CD4-positive, alpha-beta memory T cell (primary cell): ENCODE measurements at regions of chr3 and their contacts with region 1.

Region 1: GRCh38 chr3:50350527-50351322 is at the starts of genes CYB561D2 and NPRL2:
- DNase-seq: peak; percentile 99 to 100 (median 99)
- H3K4me3 ChIP-seq: peak within 1 kb of the TSS; percentile 66 to 98
- H3K4me3 Mint-ChIP-seq: peak within 1 kb of the TSS; percentile 91 to 99 (median 96)
- H3K27ac ChIP-seq: peak within 1 kb of the TSS; percentile 94
- H3K27ac Mint-ChIP-seq: peak within 1 kb of the TSS; percentile 96 to 99 (median 99)
- H3K4me1 ChIP-seq: peaks cover 58% of the 10 kb centered on the region
- H3K4me1 Mint-ChIP-seq: peaks cover 28 to 78% (median 53%) of the 10 kb centered on the region in 4 donors
- H3K27me3 ChIP-seq: no peaks in the 10 kb centered on the region
- H3K27me3 Mint-ChIP-seq: no peaks in the 10 kb centered on the region
- total RNA-seq, gene CYB561D2: 39.6 to 40.0 TPM
- total RNA-seq, gene NPRL2: 50.0 to 53.0 TPM

Region 2: GRCh38 chr3:50227390-50228183 is 123.1 kb before region 1 on chr3:
- CTCF ChIA-PET with region 1: no interaction called
- POLR2A ChIA-PET with region 1: no interaction called
- intact Hi-C with region 1: no loop called
- DNase-seq: peak; percentile 90 to 92 (median 91)
- H3K4me3 ChIP-seq: peak overlapping the region; percentile 79 to 87
- H3K4me3 Mint-ChIP-seq: peak overlapping the region; percentile 89 to 99 (median 94)
- H3K27ac ChIP-seq: peak overlapping the region; percentile 59
- H3K27ac Mint-ChIP-seq: peak overlapping the region; percentile 92 to 96 (median 95)
- H3K4me1 ChIP-seq: peaks cover 18% of the 10 kb centered on the region
- H3K4me1 Mint-ChIP-seq: peaks cover 15 to 39% (median 30%) of the 10 kb centered on the region in 4 donors
- H3K27me3 ChIP-seq: no peaks in the 10 kb centered on the region
- H3K27me3 Mint-ChIP-seq: peaks cover 0 to 2% of the 10 kb centered on the region in 2 donors

Region 3: DNA sequence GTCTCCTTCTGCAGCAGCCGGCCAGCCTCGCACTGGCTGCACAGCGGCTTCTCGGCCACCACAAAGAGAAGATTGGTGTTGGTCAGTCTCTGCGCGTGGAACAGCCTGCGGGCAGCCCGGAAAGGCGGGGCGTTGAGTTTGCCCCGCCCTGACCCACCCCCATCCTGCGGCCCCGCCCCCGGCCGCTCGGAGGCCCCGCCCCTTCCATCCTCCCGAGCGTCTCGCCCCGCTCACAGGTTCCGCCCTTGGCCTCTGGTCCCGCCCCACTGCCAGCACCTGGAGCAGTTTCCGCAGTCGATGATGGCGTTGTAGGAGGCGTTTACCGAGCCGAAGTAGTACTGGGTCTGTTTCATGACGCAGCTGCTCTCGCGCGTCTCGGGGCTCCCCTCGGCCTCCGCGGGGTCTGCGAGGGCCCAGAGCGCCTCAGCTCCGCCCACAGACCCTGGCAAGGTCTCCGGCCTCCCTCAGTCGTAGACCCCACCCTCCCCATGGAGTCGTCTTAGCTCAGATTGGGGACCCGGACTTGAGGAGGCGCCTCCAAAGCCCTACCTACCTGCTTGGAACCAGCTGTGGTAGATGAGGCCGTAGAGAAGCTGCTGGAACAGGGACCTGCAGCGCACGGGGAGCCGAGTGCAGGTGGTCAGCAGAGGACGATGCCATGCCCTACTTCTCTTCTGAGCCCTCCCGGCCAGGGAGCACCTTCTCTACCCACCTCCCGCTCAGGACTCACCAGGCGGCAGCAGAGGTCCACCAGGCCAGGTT is 14.5 kb after region 1 on chr3:
- CTCF ChIA-PET with region 1: interaction called, 13 read pairs
- POLR2A ChIA-PET with region 1: interaction called, 595 read pairs
- intact Hi-C with region 1: loop called (anchors 2 kb)
- DNase-seq: peak; percentile 92 to 97 (median 95)
- H3K4me3 ChIP-seq: peak overlapping the region; percentile 73 to 100
- H3K4me3 Mint-ChIP-seq: peak overlapping the region; percentile 86 to 94 (median 90)
- H3K27ac ChIP-seq: peak overlapping the region; percentile 87
- H3K27ac Mint-ChIP-seq: peak overlapping the region; percentile 91 to 97 (median 95)
- H3K4me1 ChIP-seq: peaks cover 30% of the 10 kb centered on the region
- H3K4me1 Mint-ChIP-seq: peaks cover 4 to 35% (median 18%) of the 10 kb centered on the region in 4 donors
- H3K27me3 ChIP-seq: no peaks in the 10 kb centered on the region
- H3K27me3 Mint-ChIP-seq: peaks cover 0 to 1% of the 10 kb centered on the region in 2 donors

Region 4: DNA sequence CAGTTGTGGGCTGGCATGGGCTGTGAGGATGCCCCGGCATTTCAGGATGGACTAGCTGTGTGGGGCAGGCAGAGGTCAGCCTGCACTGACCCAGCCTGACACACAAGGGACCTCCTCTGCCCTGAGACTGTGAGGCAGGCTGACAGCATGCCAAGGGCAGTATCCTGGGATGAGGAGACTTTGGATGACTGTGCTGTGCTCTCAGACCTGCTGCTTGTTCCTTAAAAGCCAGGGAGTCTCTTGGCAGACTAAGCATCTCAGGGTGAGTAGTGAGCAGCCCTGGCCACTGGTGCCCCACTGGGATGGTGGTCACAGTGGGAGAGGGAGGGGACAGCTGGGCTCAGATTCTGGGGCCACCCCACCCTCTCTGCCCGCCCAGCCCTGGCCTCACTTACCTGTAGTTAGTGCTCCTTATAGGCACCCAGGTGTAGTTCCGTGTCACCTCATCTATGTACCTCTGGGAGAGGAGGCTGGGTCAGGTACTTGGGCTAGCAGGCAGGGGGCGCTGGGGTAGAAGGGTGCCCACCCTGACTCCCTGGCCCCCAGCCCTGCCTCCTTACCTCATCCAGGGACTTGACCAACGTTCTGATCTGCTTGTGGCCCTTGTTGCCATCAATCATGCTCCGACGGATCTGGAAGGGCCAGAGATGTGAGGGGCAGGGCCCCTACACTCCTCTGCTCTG is 24.7 kb after region 1 on chr3:
- CTCF ChIA-PET with region 1: no interaction called
- POLR2A ChIA-PET with region 1: no interaction called
- intact Hi-C with region 1: no loop called
- DNase-seq: no peak
- H3K4me3 ChIP-seq: no peak overlapping the region
- H3K4me3 Mint-ChIP-seq: no peak overlapping the region
- H3K27ac ChIP-seq: no peak overlapping the region
- H3K27ac Mint-ChIP-seq: no peak overlapping the region
- H3K4me1 ChIP-seq: no peaks in the 10 kb centered on the region
- H3K4me1 Mint-ChIP-seq: peaks cover 0 to 2% (median under 1%) of the 10 kb centered on the region in 4 donors
- H3K27me3 ChIP-seq: no peaks in the 10 kb centered on the region
- H3K27me3 Mint-ChIP-seq: no peaks in the 10 kb centered on the region

Region 5: DNA sequence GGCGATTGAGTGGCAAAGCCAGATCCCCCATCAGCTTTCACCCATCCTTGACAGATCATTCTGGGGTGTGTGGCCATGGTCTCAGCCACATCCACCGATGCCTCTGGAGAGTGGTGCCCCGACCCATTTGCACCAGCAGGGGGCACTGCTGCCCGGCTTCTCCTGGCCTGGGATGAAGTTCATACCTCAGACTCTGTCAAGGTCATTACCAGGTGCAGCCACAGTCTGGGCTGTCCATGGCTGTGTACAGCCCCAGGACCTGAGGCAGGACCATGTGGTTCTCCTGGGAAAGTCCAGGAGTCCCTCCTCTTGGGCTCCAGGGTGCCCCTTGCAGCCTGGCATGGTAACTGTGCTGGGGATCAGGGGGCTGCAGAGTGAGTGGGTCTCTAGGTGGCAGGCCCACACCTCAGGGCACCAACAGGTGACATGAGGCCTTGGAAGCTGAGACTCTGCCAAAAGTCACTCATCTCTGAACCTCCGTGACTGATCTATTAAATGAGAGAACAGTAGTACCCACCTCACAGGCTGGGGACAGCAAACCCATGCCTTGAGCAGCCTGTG is 85.5 kb after region 1 on chr3:
- CTCF ChIA-PET with region 1: no interaction called
- POLR2A ChIA-PET with region 1: no interaction called
- intact Hi-C with region 1: loop called (anchors 1 kb)
- DNase-seq: peak; percentile 63 to 74 (median 66)
- H3K4me3 ChIP-seq: no peak overlapping the region
- H3K4me3 Mint-ChIP-seq: no peak overlapping the region
- H3K27ac ChIP-seq: no peak overlapping the region
- H3K27ac Mint-ChIP-seq: peak overlapping the region in 1 of 7 donors; percentile 14
- H3K4me1 ChIP-seq: no peaks in the 10 kb centered on the region
- H3K4me1 Mint-ChIP-seq: peaks cover 0 to 6% (median 2%) of the 10 kb centered on the region in 4 donors
- H3K27me3 ChIP-seq: no peaks in the 10 kb centered on the region
- H3K27me3 Mint-ChIP-seq: peaks cover 0 to 3% of the 10 kb centered on the region in 2 donors

Region 6: GRCh38 chr3:50550079-50550741 is 199.5 kb after region 1 on chr3:
- CTCF ChIA-PET with region 1: interaction called, 31 read pairs
- POLR2A ChIA-PET with region 1: interaction called, 3 read pairs
- intact Hi-C with region 1: no loop called
- DNase-seq: peak; percentile 38 to 62 (median 45)
- H3K4me3 ChIP-seq: no peak overlapping the region
- H3K4me3 Mint-ChIP-seq: no peak overlapping the region
- H3K27ac ChIP-seq: no peak overlapping the region
- H3K27ac Mint-ChIP-seq: no peak overlapping the region
- H3K4me1 ChIP-seq: no peaks in the 10 kb centered on the region
- H3K4me1 Mint-ChIP-seq: no peaks in the 10 kb centered on the region
- H3K27me3 ChIP-seq: no peaks in the 10 kb centered on the region
- H3K27me3 Mint-ChIP-seq: no peaks in the 10 kb centered on the region

Region 7: GRCh38 chr3:50600841-50601591 is 250.3 kb after region 1 on chr3:
- CTCF ChIA-PET with region 1: no interaction called
- POLR2A ChIA-PET with region 1: no interaction called
- intact Hi-C with region 1: no loop called
- DNase-seq: peak; percentile 62 to 80 (median 65)
- H3K4me3 ChIP-seq: peak overlapping the region in 1 of 2 donors; percentile 37
- H3K4me3 Mint-ChIP-seq: peak overlapping the region; percentile 75 to 99 (median 84)
- H3K27ac ChIP-seq: peak overlapping the region; percentile 81
- H3K27ac Mint-ChIP-seq: peak overlapping the region; percentile 90 to 99 (median 95)
- H3K4me1 ChIP-seq: peaks cover 79% of the 10 kb centered on the region
- H3K4me1 Mint-ChIP-seq: peaks cover 58 to 83% (median 69%) of the 10 kb centered on the region in 4 donors
- H3K27me3 ChIP-seq: no peaks in the 10 kb centered on the region
- H3K27me3 Mint-ChIP-seq: no peaks in the 10 kb centered on the region